AG04450 (cell line): ENCODE measurements at regions of chr7 and their contacts with region 1.

Region 1: DNA sequence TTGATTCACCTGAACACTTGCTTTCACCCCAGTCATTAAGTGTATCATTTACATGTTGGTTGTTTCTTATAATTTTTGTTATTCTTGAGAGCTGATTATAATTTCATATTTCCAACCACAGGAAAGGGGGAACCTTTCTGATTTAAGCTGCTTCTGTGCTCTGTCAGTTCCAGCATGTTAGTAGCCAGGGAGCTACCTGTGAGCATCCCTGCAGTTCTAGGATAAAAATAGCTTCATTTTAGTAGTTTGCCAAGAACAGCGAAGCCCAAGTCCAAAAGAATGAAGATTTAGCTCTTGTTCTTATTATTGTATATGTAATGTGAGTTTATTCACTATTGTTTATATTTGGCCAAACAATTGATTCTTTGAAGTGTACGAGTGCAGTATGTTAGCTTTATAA is 29.5 kb downstream of the DNAH11 start:
- DNase-seq: no peak
- H3K4me3 ChIP-seq: no peak overlapping the region
- H3K27ac ChIP-seq: no peak overlapping the region
- H3K27me3 ChIP-seq: no peaks in the 10 kb centered on the region
- CTCF ChIP-seq: no peak

Region 2: DNA sequence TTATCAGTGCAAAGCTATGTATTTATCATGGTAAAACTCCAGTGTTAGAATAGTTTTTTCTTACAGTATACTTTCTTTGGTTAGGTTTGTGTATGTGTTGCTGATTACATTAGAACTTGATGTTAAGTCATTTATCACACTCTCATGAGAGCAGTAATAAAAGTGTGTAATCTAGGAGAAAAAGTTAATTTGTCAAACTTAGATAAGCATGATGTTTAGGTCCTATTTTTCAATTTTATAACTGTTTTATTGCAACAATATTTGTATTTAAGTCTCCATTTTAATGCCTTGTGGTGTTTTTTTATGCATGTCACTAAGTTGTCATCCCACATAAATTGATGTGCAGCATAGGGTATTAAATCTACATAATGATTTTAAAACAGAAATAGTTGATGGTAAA is 58.3 kb before region 1 on chr7:
- CTCF ChIA-PET with region 1: no interaction called
- POLR2A ChIA-PET with region 1: interaction called, 12 read pairs
- DNase-seq: no peak
- H3K4me3 ChIP-seq: no peak overlapping the region
- H3K27ac ChIP-seq: no peak overlapping the region
- H3K27me3 ChIP-seq: no peaks in the 10 kb centered on the region
- CTCF ChIP-seq: no peak

Region 3: DNA sequence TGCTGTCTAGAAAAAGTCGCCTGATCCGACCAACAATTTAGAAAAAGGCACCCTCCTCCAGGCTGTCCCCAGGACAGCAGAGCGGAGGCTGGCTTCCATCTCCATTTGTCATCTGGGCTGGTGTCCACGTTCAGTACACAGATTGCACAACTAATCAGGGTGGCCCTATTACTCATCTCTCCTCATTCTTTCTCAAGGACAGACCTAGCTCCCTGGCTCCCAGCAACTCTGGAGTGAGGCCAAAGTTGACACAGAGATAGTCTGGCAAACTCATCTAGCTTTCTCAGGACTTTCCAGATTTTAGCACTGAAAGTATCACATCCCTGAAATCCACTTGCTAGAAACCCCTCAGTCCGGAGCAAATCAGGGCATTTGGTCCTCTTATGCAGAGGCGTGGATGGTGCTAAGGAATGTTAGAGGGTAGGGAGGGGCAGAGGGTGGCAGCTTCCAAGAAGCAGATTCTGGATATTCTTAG is 45.6 kb after region 1 on chr7:
- CTCF ChIA-PET with region 1: no interaction called
- POLR2A ChIA-PET with region 1: no interaction called
- DNase-seq: no peak
- H3K4me3 ChIP-seq: no peak overlapping the region
- H3K27ac ChIP-seq: no peak overlapping the region
- H3K27me3 ChIP-seq: no peaks in the 10 kb centered on the region
- CTCF ChIP-seq: no peak